H1 (cell line): ENCODE measurements at regions of chr20 and their contacts with region 1.

Region 1: GRCh38 chr20:37192137-37192854 is 12.9 kb upstream of the MROH8 start:
- DNase-seq: peak; percentile 23 to 87
- H3K4me3 ChIP-seq: no peak overlapping the region
- H3K27ac ChIP-seq: no peak overlapping the region
- H3K4me1 ChIP-seq: no peaks in the 10 kb centered on the region
- H3K27me3 ChIP-seq: no peaks in the 10 kb centered on the region
- CTCF ChIP-seq: peak; percentile 83 to 97 (median 94)
- EP300 ChIP-seq: no peak
- POLR2A ChIP-seq: no peak
- RAD21 ChIP-seq: peak; percentile 23 to 53

Region 2: GRCh38 chr20:36605399-36606157 is 586.7 kb before region 1 on chr20 and contains the start of gene RAB5IF:
- CTCF ChIA-PET with region 1: no interaction called
- POLR2A ChIA-PET with region 1: no interaction called
- DNase-seq: peak; percentile 99 to 100
- H3K4me3 ChIP-seq: peak within 1 kb of the TSS; percentile 73 to 98 (median 95)
- H3K27ac ChIP-seq: peak within 1 kb of the TSS; percentile 78; the same call in 1 of the 2 replicates
- H3K4me1 ChIP-seq: peaks cover 0 to 4% (median 2%) of the 10 kb centered on the region in 4 experiments; a peak in 3 of 7 replicates
- H3K27me3 ChIP-seq: no peaks in the 10 kb centered on the region; a peak in 1 of 7 replicates
- CTCF ChIP-seq: peak; percentile 92 to 99 (median 94)
- EP300 ChIP-seq: no peak; a peak in 1 of 3 replicates
- POLR2A ChIP-seq: peak; percentile 66 to 90
- RAD21 ChIP-seq: peak; percentile 77 to 79
- total RNA-seq, gene RAB5IF: 94.2 and 95.5 TPM in 2 replicates

Region 3: DNA sequence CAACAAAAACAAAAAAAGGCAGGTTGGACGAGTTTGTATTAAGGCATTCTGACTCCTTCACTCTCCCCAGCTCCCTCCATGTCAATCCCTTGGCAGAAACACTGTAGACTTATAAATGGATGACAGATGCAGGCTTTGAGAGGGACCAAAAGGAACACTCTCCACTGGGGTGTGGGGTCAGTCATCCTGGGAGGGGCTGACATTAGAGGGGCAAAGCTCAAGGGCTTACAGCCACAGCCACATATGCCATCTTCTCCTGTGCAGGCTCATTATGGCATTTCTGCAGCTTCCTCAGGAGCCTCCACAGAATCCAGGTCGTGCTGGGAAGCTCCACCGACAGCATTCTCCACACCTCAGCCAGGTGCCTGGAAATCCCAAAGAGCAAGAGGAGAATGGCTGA is 63.5 kb before region 1 on chr20:
- CTCF ChIA-PET with region 1: no interaction called
- POLR2A ChIA-PET with region 1: no interaction called
- DNase-seq: no peak
- H3K4me3 ChIP-seq: no peak overlapping the region
- H3K27ac ChIP-seq: no peak overlapping the region
- H3K4me1 ChIP-seq: no peaks in the 10 kb centered on the region
- H3K27me3 ChIP-seq: no peaks in the 10 kb centered on the region
- CTCF ChIP-seq: no peak
- EP300 ChIP-seq: no peak
- POLR2A ChIP-seq: no peak
- RAD21 ChIP-seq: no peak

Region 4: DNA sequence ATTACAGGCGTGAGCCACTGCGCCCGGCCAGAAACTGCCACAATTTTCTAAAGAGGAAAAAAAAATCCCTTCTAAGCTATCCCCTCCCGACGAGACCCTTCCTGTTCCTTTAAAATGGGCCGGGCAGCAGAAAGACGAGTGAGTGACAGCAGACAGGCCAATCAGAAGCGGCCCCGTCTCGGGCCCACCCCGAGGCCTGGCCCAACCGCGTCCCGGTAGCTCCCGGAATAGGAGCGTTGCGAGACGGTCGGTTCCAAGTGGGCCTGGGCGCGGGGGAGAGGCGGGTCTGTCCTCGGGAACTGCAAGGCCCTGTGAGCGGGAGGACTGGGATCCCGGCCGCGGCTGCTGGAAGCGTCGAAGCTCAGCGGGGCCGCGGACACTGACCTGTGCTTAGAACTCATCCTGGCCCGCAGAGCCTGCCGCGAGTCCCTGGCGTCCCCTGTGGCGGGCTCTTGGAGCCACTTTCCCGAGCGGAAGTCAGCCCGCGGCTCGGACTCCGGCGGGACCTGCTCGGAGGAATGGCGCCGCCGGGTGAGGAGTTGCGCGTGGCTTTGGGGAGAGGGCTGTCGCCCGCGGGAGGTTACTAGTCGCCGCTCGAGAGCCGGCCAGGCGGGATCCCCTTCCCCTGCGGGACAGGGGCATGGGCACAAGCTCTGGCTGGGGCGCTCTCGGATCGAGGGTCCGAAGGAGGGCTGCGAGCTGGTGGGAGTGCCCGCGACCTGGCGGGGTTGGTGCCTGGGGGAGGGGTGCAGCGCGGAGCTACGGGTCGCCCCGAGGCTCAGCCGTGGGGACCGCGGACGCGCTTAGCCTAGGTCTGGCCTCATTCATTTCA is 13.2 kb before region 1 on chr20 and contains the starts of genes MROH8 and RPN2:
- CTCF ChIA-PET with region 1: interaction called, 39 read pairs
- POLR2A ChIA-PET with region 1: interaction called, 57 read pairs
- DNase-seq: peak; percentile 91 to 95
- H3K4me3 ChIP-seq: peak within 1 kb of the TSS; percentile 80 to 97 (median 92)
- H3K27ac ChIP-seq: peak within 1 kb of the TSS; percentile 98
- H3K4me1 ChIP-seq: peaks cover 0 to 8% (median 4%) of the 10 kb centered on the region in 4 experiments; a peak in 5 of 7 replicates
- H3K27me3 ChIP-seq: no peaks in the 10 kb centered on the region
- CTCF ChIP-seq: no peak
- EP300 ChIP-seq: peak in 1 of 2 experiments; percentile 94; a peak in 1 of 3 replicates
- POLR2A ChIP-seq: peak; percentile 66 to 72
- RAD21 ChIP-seq: no peak
- total RNA-seq, gene MROH8: 0.48 and 0.50 TPM in 2 replicates
- total RNA-seq, gene RPN2: 226 and 236 TPM in 2 replicates

Region 5: DNA sequence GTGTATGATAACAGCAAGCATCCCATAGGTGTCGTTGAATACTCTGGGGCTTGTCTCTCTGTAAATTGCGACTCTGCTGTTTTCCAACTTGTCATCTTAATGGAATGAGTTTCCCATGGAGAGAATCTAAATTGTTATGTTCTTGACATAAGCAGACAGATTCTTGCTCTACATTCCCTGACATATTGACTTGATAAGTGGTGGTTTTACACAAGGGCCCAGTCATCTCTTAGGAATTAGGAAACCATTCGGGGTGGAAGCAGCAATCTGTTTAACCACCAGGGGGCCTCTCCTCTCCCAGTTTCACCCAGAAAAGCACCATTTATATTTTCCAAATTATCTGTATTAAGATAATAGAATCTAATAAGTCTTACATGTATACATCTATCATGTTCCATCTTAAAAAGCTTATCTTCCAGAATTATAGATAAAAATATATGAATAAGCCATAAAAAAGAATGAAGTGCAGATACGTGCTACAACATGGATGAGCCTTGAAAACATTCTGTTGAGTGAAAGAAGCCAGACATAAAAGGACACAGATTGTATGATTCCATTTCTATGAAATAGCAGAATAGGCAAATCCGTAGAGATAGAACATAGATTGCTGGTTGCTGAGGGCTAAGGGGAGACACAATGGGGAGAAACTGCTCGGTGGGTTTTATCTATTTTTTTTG is 10.1 kb after region 1 on chr20:
- CTCF ChIA-PET with region 1: interaction called, 31 read pairs
- POLR2A ChIA-PET with region 1: interaction called, 3 read pairs
- DNase-seq: peak in 1 of 2 experiments; percentile 10
- H3K4me3 ChIP-seq: no peak overlapping the region
- H3K27ac ChIP-seq: no peak overlapping the region
- H3K4me1 ChIP-seq: no peaks in the 10 kb centered on the region
- H3K27me3 ChIP-seq: no peaks in the 10 kb centered on the region
- CTCF ChIP-seq: peak; percentile 33 to 61 (median 52); a peak in 3 of 4 replicates
- EP300 ChIP-seq: no peak
- POLR2A ChIP-seq: no peak
- RAD21 ChIP-seq: peak in 1 of 2 experiments; percentile 42; a peak in 2 of 4 replicates

Region 6: GRCh38 chr20:37209661-37210314 is 17.5 kb after region 1 on chr20:
- CTCF ChIA-PET with region 1: interaction called, 27 read pairs
- POLR2A ChIA-PET with region 1: no interaction called
- DNase-seq: no peak
- H3K4me3 ChIP-seq: no peak overlapping the region
- H3K27ac ChIP-seq: no peak overlapping the region
- H3K4me1 ChIP-seq: no peaks in the 10 kb centered on the region
- H3K27me3 ChIP-seq: no peaks in the 10 kb centered on the region
- CTCF ChIP-seq: no peak
- EP300 ChIP-seq: no peak
- POLR2A ChIP-seq: no peak
- RAD21 ChIP-seq: no peak

Region 7: GRCh38 chr20:37223053-37223452 is 30.8 kb after region 1 on chr20:
- CTCF ChIA-PET with region 1: interaction called, 10 read pairs
- POLR2A ChIA-PET with region 1: no interaction called
- DNase-seq: no peak
- H3K4me3 ChIP-seq: no peak overlapping the region
- H3K27ac ChIP-seq: no peak overlapping the region
- H3K4me1 ChIP-seq: peaks cover 0 to 9% (median 0%) of the 10 kb centered on the region in 4 experiments; a peak in 3 of 7 replicates
- H3K27me3 ChIP-seq: no peaks in the 10 kb centered on the region; a peak in 1 of 7 replicates
- CTCF ChIP-seq: no peak
- EP300 ChIP-seq: no peak
- POLR2A ChIP-seq: no peak
- RAD21 ChIP-seq: no peak

Region 8: DNA sequence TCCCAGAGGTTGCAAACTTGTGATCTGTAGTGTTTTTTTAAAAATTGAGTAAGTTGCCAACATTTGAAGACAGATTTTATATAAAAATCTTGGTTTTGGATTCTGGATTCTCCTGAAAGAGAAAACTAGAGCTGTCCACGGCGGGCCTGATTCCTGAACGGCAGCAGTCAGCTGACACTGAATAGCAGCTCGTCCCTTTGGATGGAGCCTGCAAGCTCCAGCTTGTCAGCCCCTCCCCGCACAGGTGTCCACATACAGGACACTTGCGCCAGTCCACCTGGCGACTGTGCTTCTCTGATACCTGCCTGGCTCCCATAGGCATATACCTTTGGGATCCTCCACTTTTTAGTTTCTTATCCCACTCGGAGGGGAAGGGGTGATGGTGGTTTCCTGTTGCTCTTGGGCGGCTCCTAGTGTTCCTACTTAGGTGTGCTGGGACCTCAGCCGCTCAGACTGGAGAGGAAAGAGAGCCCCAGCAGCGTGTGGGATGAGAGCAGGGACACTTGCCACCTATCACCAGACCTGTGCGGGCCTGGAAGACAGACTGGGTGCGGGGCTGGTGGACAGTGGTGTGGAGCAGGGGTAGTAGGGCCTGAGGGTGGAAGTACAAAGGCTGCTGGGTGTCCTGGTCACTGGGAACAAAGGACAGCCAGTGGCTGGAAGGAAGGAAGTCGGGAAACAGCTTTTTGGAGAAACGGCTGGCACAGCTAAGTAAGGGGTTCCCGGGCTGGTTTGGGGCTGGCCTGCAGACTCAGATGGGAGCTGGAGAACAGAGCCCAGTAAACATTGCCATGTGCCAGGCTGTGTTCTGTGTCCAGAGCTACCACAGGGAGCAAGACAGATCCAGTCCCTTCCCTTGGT is 51.0 kb after region 1 on chr20:
- CTCF ChIA-PET with region 1: interaction called, 21 read pairs
- POLR2A ChIA-PET with region 1: interaction called, 3 read pairs
- DNase-seq: peak in 1 of 2 experiments; percentile 66
- H3K4me3 ChIP-seq: no peak overlapping the region
- H3K27ac ChIP-seq: 0 out of 2 replicates have a peak overlapping the region, but pooled peaks have one; percentile 48
- H3K4me1 ChIP-seq: peaks cover 8 to 15% (median 11%) of the 10 kb centered on the region in 4 experiments; a peak in 6 of 7 replicates
- H3K27me3 ChIP-seq: no peaks in the 10 kb centered on the region
- CTCF ChIP-seq: peak; percentile 58 to 73 (median 65)
- EP300 ChIP-seq: no peak
- POLR2A ChIP-seq: no peak
- RAD21 ChIP-seq: peak; percentile 38 to 63

Region 9: GRCh38 chr20:37298190-37298939 is 106.1 kb after region 1 on chr20:
- CTCF ChIA-PET with region 1: no interaction called
- POLR2A ChIA-PET with region 1: no interaction called
- DNase-seq: no peak
- H3K4me3 ChIP-seq: no peak overlapping the region
- H3K27ac ChIP-seq: no peak overlapping the region
- H3K4me1 ChIP-seq: no peaks in the 10 kb centered on the region
- H3K27me3 ChIP-seq: no peaks in the 10 kb centered on the region
- CTCF ChIP-seq: no peak
- EP300 ChIP-seq: no peak
- POLR2A ChIP-seq: no peak
- RAD21 ChIP-seq: no peak